Body of pancreas (tissue), 4 donors: ENCODE measurements at regions of chr19 and their contacts with region 1.

Region 1: GRCh38 chr19:55809381-55810058 is 22.3 kb downstream of the NLRP11 start:
- DNase-seq: peak; percentile 79 to 89 (median 84)
- ATAC-seq: peak; percentile 90
- H3K4me3 ChIP-seq: no peak overlapping the region
- H3K27ac ChIP-seq: no peak overlapping the region
- H3K4me1 ChIP-seq: peaks cover 9% of the 10 kb centered on the region
- H3K27me3 ChIP-seq: no peaks in the 10 kb centered on the region
- CTCF ChIP-seq: peak; percentile 21 to 81 (median 71)
- POLR2A ChIP-seq: no peak

Region 2: GRCh38 chr19:55703790-55704215 is 105.7 kb before region 1 on chr19:
- intact Hi-C with region 1: loop called (anchors 10 kb)
- DNase-seq: peak; percentile 71 to 78 (median 75)
- ATAC-seq: peak; percentile 83
- H3K4me3 ChIP-seq: no peak overlapping the region
- H3K27ac ChIP-seq: no peak overlapping the region
- H3K4me1 ChIP-seq: peaks cover 20% of the 10 kb centered on the region
- H3K27me3 ChIP-seq: no peaks in the 10 kb centered on the region
- CTCF ChIP-seq: peak; percentile 84 to 94 (median 90)
- POLR2A ChIP-seq: no peak

Region 3: GRCh38 chr19:55930996-55931515 is 121.5 kb after region 1 on chr19:
- intact Hi-C with region 1: no loop called
- DNase-seq: no peak
- ATAC-seq: no peak
- H3K4me3 ChIP-seq: no peak overlapping the region
- H3K27ac ChIP-seq: no peak overlapping the region
- H3K4me1 ChIP-seq: no peaks in the 10 kb centered on the region
- H3K27me3 ChIP-seq: no peaks in the 10 kb centered on the region
- CTCF ChIP-seq: no peak
- POLR2A ChIP-seq: no peak